HCT116 (cell line): ENCODE measurements at regions of chr22 and their contacts with region 1.

Region 1: DNA sequence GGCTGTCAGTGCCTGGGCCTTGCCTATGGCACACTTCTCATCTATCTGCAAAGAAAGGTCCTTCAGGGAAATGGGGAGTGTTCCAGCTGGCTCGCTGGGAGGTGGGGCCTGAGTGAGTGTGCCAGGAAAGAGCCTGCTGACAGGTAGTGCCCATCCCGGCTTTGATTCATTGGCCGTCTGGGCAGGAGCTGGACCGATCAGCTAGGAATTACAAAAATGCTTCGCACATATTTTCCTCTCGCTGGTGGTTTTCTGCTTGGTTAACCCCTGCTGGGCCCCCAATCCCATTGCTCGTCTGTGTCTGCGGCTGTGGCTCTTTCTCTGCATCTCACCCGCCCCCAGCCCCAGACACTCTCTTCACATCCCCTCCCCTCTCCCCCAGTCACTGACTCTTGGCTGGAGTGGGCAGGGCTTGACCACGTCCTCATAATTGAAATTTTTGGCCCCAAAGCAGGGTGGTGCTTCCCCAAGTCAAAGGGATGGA is 10.8 kb downstream of the LIF start:
- DNase-seq: no peak
- ATAC-seq: peak; percentile 73
- H3K4me3 ChIP-seq: peak overlapping the region in 1 of 2 experiments; percentile 30; a peak in 2 of 4 replicates
- H3K27ac ChIP-seq: peak overlapping the region; percentile 53
- H3K4me1 ChIP-seq: peaks cover 43 to 86% of the 10 kb centered on the region in 2 experiments
- H3K27me3 ChIP-seq: no peaks in the 10 kb centered on the region
- CTCF ChIP-seq: no peak
- POLR2A ChIP-seq: no peak
- RAD21 ChIP-seq: no peak

Region 2: DNA sequence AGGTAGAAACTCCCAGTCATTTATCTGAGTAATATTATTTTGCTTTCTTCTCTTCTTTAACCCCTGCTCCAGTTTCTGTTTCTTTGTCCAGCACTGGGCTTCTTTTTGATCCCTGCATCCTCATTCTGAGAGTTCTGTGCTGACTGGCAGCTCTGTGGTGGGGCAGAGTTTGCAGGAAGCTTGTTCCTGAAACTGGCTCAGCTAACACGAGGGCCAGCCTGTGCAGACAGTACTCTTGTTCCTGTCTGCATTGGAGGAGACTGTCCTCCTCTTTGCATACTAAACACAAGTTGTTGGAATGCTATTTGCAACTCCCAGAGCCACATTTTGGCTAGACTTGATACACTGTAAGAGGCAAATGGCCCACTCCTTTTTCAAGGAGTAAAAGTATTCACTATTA is 248.6 kb before region 1 on chr22:
- CTCF ChIA-PET with region 1: no interaction called
- POLR2A ChIA-PET with region 1: no interaction called
- RAD21 ChIA-PET with region 1: no interaction called
- intact Hi-C with region 1: no loop called
- DNase-seq: no peak
- ATAC-seq: no peak
- H3K4me3 ChIP-seq: no peak overlapping the region
- H3K27ac ChIP-seq: no peak overlapping the region
- H3K4me1 ChIP-seq: no peaks in the 10 kb centered on the region
- H3K27me3 ChIP-seq: no peaks in the 10 kb centered on the region
- CTCF ChIP-seq: no peak
- POLR2A ChIP-seq: no peak
- RAD21 ChIP-seq: no peak

Region 3: DNA sequence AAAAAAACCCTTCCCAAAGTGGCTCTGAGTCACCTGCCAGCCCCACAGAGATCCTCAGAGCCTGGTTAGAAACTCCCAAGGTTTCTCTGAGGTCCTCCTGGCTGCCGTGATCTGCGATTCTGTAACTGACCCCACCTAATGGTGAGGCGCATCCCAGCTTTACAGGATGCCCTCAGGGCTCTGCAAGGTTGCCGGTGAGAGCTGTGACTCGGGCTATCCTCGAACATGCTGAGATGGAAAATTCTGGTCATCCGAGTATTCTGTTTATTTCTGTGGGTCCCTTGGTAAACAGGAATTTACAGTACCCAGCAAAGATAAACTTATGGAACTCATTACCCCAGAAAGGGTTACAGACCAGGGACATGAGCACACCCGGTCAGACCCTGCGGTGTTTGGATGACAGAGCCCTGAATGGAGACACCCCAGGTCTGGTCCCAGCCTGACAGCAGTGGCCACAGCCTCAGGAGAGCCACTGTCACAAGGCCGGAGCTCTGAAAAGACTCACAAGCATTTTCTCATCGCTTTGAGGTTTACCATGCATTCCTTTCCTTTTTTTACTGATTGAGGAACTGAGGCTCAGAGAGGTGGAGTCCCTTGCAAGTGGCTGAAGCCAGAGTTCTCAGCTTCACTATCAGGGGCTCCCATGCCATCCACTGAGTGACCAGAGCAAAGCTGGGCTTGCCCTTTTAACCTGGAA is 11.4 kb before region 1 on chr22:
- CTCF ChIA-PET with region 1: interaction called, 3 read pairs
- POLR2A ChIA-PET with region 1: interaction called, 13 read pairs
- RAD21 ChIA-PET with region 1: interaction called in 1 of 2 experiments, 3 read pairs
- intact Hi-C with region 1: no loop called
- DNase-seq: peak; percentile 89
- ATAC-seq: peak; percentile 71
- H3K4me3 ChIP-seq: peak overlapping the region in 1 of 2 experiments; percentile 25; a peak in 1 of 4 replicates
- H3K27ac ChIP-seq: peak overlapping the region; percentile 92
- H3K4me1 ChIP-seq: peaks cover 49 to 90% of the 10 kb centered on the region in 2 experiments
- H3K27me3 ChIP-seq: no peaks in the 10 kb centered on the region
- CTCF ChIP-seq: peak in 2 of 3 experiments; percentile 15 to 20; a peak in 2 of 6 replicates
- POLR2A ChIP-seq: no peak
- RAD21 ChIP-seq: no peak; the same call in 1 of the 2 replicates

Region 4: GRCh38 chr22:30373331-30374325 is 137.9 kb after region 1 on chr22:
- CTCF ChIA-PET with region 1: no interaction called
- POLR2A ChIA-PET with region 1: no interaction called
- RAD21 ChIA-PET with region 1: no interaction called
- intact Hi-C with region 1: no loop called
- DNase-seq: no peak
- ATAC-seq: no peak
- H3K4me3 ChIP-seq: no peak overlapping the region
- H3K27ac ChIP-seq: no peak overlapping the region
- H3K4me1 ChIP-seq: no peaks in the 10 kb centered on the region
- H3K27me3 ChIP-seq: no peaks in the 10 kb centered on the region
- CTCF ChIP-seq: no peak
- POLR2A ChIP-seq: no peak
- RAD21 ChIP-seq: no peak

Region 5: GRCh38 chr22:30386960-30387827 is 151.5 kb after region 1 on chr22 and contains the start of gene RNF215:
- CTCF ChIA-PET with region 1: no interaction called
- POLR2A ChIA-PET with region 1: no interaction called
- RAD21 ChIA-PET with region 1: no interaction called
- intact Hi-C with region 1: no loop called
- DNase-seq: peak; percentile 44
- ATAC-seq: peak; percentile 88
- H3K4me3 ChIP-seq: peak within 1 kb of the TSS; percentile 60 to 68
- H3K27ac ChIP-seq: peak within 1 kb of the TSS; percentile 69
- H3K4me1 ChIP-seq: peaks cover 3 to 31% of the 10 kb centered on the region in 2 experiments; a peak in 3 of 4 replicates
- H3K27me3 ChIP-seq: no peaks in the 10 kb centered on the region
- CTCF ChIP-seq: peak; percentile 77 to 78 (median 78)
- POLR2A ChIP-seq: no peak
- RAD21 ChIP-seq: peak; percentile 88
- total RNA-seq, gene RNF215: 20.2 TPM